SK-N-SH (cell line): ENCODE measurements at regions of chr19 and their contacts with region 1.

Region 1: GRCh38 chr19:50556282-50557008 is 11.8 kb downstream of the LRRC4B start:
- DNase-seq: peak; percentile 96
- H3K4me3 ChIP-seq: peak overlapping the region; percentile 56 to 60
- H3K27ac ChIP-seq: peak overlapping the region in 1 of 2 experiments; percentile 59; a peak in 1 of 4 replicates
- H3K4me1 ChIP-seq: peaks cover 0 to 20% of the 10 kb centered on the region in 2 experiments; a peak in 1 of 4 replicates
- H3K27me3 ChIP-seq: no peaks in the 10 kb centered on the region
- CTCF ChIP-seq: peak; percentile 98
- EP300 ChIP-seq: no peak
- RAD21 ChIP-seq: peak; percentile 44

Region 2: GRCh38 chr19:50511068-50511822 is 45.2 kb before region 1 on chr19 and contains the start of gene JOSD2:
- CTCF ChIA-PET with region 1: interaction called, 54 read pairs
- POLR2A ChIA-PET with region 1: no interaction called
- DNase-seq: peak; percentile 94
- H3K4me3 ChIP-seq: peak within 1 kb of the TSS; percentile 83 to 88
- H3K27ac ChIP-seq: peak within 1 kb of the TSS; percentile 71 to 93; a peak in 3 of 4 replicates
- H3K4me1 ChIP-seq: peaks cover 0 to 41% of the 10 kb centered on the region in 2 experiments; a peak in 1 of 4 replicates
- H3K27me3 ChIP-seq: no peaks in the 10 kb centered on the region
- CTCF ChIP-seq: no peak
- EP300 ChIP-seq: no peak
- RAD21 ChIP-seq: no peak
- polyA plus RNA-seq, gene JOSD2: 71.5 and 81.2 TPM in 2 replicates

Region 3: DNA sequence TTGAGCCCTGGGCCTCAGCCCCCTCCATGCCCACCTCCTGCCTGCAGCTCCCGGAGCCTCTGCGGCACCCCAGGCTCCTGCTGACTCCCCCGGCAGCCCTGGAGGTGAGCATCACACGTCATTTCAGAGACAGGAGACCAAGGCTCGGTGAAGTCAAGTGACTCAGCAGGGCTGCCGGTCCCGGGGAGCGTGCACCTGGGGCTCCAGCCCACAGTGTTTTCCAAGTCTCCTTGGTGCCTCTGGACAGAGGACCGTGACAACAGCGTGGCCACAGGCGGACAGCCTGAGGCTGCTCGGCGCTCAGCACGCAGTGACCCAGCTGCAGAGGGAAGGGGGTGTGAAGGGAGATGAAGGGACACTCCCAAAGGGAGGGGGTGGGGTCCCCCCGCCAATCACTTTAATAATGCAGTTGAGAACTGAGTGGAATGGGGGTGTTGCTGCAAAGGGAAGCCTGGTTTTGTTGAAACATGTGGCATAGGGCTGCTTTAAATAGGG is 25.3 kb before region 1 on chr19:
- CTCF ChIA-PET with region 1: interaction called, 170 read pairs
- POLR2A ChIA-PET with region 1: no interaction called
- DNase-seq: no peak
- H3K4me3 ChIP-seq: no peak overlapping the region
- H3K27ac ChIP-seq: no peak overlapping the region
- H3K4me1 ChIP-seq: peaks cover 0 to 3% of the 10 kb centered on the region in 2 experiments; a peak in 1 of 4 replicates
- H3K27me3 ChIP-seq: no peaks in the 10 kb centered on the region
- CTCF ChIP-seq: no peak
- EP300 ChIP-seq: no peak
- RAD21 ChIP-seq: no peak

Region 4: GRCh38 chr19:50568321-50569075 is 12.1 kb after region 1 on chr19 and contains the start of gene LRRC4B:
- CTCF ChIA-PET with region 1: interaction called, 50 read pairs
- POLR2A ChIA-PET with region 1: no interaction called
- DNase-seq: peak; percentile 93
- H3K4me3 ChIP-seq: peak within 1 kb of the TSS; percentile 54 to 55; a peak in 3 of 4 replicates
- H3K27ac ChIP-seq: peak within 1 kb of the TSS in 1 of 2 experiments; percentile 71; a peak in 2 of 4 replicates
- H3K4me1 ChIP-seq: peaks cover 0 to 14% of the 10 kb centered on the region in 2 experiments; a peak in 1 of 4 replicates
- H3K27me3 ChIP-seq: no peaks in the 10 kb centered on the region
- CTCF ChIP-seq: no peak
- EP300 ChIP-seq: no peak
- RAD21 ChIP-seq: no peak
- polyA plus RNA-seq, gene LRRC4B: 5.4 and 6.9 TPM in 2 replicates

Region 5: GRCh38 chr19:50590191-50590590 is 33.7 kb after region 1 on chr19:
- CTCF ChIA-PET with region 1: interaction called, 16 read pairs
- POLR2A ChIA-PET with region 1: interaction called, 3 read pairs
- DNase-seq: no peak
- H3K4me3 ChIP-seq: no peak overlapping the region
- H3K27ac ChIP-seq: no peak overlapping the region
- H3K4me1 ChIP-seq: no peaks in the 10 kb centered on the region
- H3K27me3 ChIP-seq: peaks cover 9% of the 10 kb centered on the region; the same call in 1 of the 2 replicates
- CTCF ChIP-seq: no peak
- EP300 ChIP-seq: no peak
- RAD21 ChIP-seq: no peak